Esophagus squamous epithelium (tissue), 5 donors: ENCODE measurements at regions of chr16 and their contacts with region 1.

Region 1: GRCh38 chr16:66735891-66736290 is 15.5 kb downstream of the DYNC1LI2 start:
- DNase-seq: no peak
- H3K4me3 ChIP-seq: no peak overlapping the region
- H3K27ac ChIP-seq: no peak overlapping the region
- H3K4me1 ChIP-seq: peaks cover 10 to 36% (median 18%) of the 10 kb centered on the region in 3 donors
- H3K27me3 ChIP-seq: no peaks in the 10 kb centered on the region
- CTCF ChIP-seq: no peak
- POLR2A ChIP-seq: no peak

Region 2: DNA sequence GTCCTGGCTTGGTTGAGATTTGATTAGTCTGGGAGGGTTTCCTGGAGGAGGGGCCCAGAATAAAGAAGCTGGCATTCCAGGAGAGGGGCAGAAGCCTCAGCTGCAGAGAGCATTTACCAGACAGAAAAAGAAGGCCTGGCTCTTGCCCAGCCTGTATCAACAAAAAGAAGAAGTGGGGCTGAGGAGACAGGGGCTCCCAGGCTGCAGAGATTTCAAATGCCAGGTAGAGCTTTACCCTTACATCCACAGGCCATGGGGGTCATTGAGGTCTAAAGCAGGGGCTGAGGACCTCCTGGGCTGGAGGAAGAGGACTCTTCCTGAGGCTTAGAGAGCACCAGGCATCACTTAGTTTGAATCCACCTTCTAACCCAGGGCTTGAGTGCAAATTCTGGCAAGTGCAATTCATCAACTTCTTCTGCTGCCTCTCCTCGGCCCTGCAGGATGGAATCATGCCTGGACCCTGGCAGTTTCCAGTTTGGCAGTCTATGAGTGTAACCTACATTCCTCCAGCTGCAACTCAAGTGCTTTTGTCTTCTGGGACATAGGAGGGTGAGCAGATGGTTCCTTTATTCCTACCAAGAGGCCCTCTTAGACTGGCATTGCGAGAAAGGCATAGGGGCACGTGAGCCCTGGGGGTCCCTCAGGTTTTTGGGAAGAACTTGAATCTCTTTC is 123.6 kb after region 1 on chr16:
- intact Hi-C with region 1: loop called (anchors 10 kb)
- DNase-seq: no peak
- H3K4me3 ChIP-seq: no peak overlapping the region
- H3K27ac ChIP-seq: no peak overlapping the region
- H3K4me1 ChIP-seq: peaks cover 0 to 6% (median 4%) of the 10 kb centered on the region in 3 donors
- H3K27me3 ChIP-seq: no peaks in the 10 kb centered on the region
- CTCF ChIP-seq: no peak
- POLR2A ChIP-seq: no peak

Region 3: DNA sequence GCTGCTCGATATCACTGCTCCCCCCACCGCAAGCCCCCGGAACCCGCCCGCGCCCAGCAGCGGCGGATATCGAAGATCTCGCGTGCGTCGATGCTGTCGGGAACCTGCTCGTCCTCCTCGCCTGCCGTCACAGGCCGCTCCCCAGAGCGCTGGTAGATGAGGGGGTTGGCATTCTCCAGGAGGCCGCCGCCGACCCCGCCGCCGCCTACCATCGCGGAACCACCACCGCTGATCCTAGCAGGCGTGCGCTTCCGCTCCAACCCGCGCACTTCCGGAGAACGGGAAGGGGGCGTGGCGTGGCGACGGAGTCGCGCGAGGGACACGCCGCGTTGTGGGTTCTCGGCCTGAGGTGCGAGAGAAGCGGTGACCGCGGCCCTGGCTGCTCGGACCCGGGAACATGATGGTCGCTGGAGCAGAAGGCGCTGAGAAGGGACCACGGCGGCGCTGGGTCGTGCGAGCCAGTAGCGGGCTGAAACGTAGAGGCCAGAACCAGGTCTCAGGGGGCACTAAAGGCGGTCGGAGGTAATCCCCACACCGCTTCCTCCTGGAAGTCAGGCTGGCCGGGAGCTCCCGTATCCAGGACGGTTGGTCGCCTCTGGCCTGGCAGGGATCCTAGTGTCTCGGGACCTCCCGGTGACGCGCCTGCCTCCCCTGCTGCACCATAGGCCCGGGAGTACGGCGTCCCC is 198.4 kb after region 1 on chr16 and contains the start of gene CIAO2B:
- intact Hi-C with region 1: no loop called
- DNase-seq: no peak
- H3K4me3 ChIP-seq: peak within 1 kb of the TSS; percentile 78 to 100 (median 92)
- H3K27ac ChIP-seq: peak within 1 kb of the TSS; percentile 97 to 100 (median 98)
- H3K4me1 ChIP-seq: peaks cover 32 to 85% (median 36%) of the 10 kb centered on the region in 3 donors
- H3K27me3 ChIP-seq: no peaks in the 10 kb centered on the region
- CTCF ChIP-seq: peak in 1 of 6 experiments; percentile 26
- POLR2A ChIP-seq: peak in 3 of 4 donors; percentile 79 to 94 (median 83)
- total RNA-seq, gene CIAO2B: 112 to 153 (median 126) TPM